HCT116 (cell line): ENCODE measurements at regions of chr19 and their contacts with region 1.

Region 1: GRCh38 chr19:48492925-48493717 is 18.5 kb downstream of the LMTK3 start:
- DNase-seq: peak; percentile 98
- ATAC-seq: peak; percentile 78
- H3K4me3 ChIP-seq: peak overlapping the region; percentile 76 to 78
- H3K27ac ChIP-seq: peak overlapping the region; percentile 93
- H3K4me1 ChIP-seq: peaks cover 46 to 72% of the 10 kb centered on the region in 2 experiments
- H3K27me3 ChIP-seq: no peaks in the 10 kb centered on the region
- CTCF ChIP-seq: no peak
- POLR2A ChIP-seq: peak; percentile 47
- RAD21 ChIP-seq: no peak

Region 2: DNA sequence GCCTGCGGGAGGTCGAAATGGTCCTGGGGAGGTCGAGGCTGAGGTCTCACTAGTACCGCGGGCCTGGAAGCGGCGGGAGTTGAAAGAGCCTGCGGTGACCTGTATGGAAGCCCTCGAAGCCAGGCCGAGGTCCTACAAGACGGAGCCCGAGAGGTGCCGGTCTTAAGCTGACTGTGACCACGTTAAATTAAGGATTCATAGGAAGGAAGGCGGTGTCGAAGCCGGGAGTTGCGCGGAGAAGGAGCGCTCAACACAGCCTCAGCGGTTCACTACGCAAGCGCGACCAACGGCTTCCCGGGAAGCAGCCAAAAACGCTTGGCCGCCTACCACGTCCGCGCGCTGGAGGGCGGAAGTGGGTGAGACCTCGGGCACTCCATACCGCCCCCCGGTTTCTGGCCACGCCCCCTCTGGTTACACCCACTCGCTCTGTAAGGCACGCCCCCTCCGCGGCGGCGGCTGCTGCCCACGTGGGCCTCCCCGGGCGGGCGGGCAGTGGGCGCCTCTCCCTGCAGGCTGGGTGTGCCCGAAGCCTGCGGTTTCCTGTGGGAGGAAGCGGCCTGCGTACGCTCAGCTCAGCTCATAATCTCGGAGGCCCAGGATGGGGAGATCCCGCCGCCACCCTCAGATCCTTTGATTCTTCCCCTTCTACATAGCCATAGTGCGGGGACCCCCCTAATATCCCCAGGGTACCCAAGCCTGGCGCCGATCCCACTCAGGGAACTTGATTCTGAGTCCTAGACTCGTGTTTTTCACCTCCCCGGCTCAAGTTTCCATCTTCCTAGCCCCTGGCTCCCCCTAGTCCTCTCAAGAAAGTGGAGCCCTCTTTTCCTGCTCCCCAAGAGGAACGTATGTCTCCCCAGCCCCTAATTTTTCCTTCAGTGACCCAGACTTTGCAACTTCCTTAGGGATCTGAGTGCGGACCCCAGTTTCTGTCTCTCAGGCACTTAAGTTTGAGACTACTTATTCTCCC is 171.2 kb before region 1 on chr19:
- CTCF ChIA-PET with region 1: interaction called, 6 read pairs
- POLR2A ChIA-PET with region 1: no interaction called
- RAD21 ChIA-PET with region 1: no interaction called
- intact Hi-C with region 1: loop called (anchors 1 kb)
- DNase-seq: peak; percentile 94
- ATAC-seq: peak; percentile 69
- H3K4me3 ChIP-seq: peak overlapping the region; percentile 55 to 67
- H3K27ac ChIP-seq: peak overlapping the region; percentile 96
- H3K4me1 ChIP-seq: peaks cover 40 to 76% of the 10 kb centered on the region in 2 experiments
- H3K27me3 ChIP-seq: no peaks in the 10 kb centered on the region
- CTCF ChIP-seq: peak in 1 of 3 experiments; percentile 8; a peak in 1 of 6 replicates
- POLR2A ChIP-seq: peak; percentile 59
- RAD21 ChIP-seq: no peak

Region 3: DNA sequence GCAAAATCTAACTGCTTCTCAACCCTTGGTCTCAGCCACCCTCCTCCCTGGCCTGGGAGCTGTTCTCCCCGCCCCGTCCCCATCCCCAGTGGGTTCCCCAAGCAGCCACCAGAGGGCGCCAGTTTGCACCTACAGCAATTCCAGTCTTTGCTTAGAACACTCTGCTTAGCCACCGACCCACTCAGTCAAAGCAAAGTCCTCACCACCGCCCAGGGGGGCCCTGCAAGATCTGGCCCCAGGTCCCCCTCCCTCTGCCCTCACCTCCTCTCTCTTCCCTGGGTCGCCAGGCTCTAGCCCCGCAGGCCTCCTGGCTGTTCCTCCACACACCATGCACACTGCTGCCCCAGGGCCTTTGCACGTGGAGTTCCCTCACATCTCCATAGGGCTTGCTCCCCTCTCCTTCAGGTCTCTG is 141.8 kb before region 1 on chr19:
- CTCF ChIA-PET with region 1: no interaction called
- POLR2A ChIA-PET with region 1: no interaction called
- RAD21 ChIA-PET with region 1: no interaction called
- intact Hi-C with region 1: loop called (anchors 5 kb)
- DNase-seq: no peak
- ATAC-seq: peak; percentile 67
- H3K4me3 ChIP-seq: no peak overlapping the region
- H3K27ac ChIP-seq: no peak overlapping the region
- H3K4me1 ChIP-seq: peaks cover 22 to 46% of the 10 kb centered on the region in 2 experiments
- H3K27me3 ChIP-seq: no peaks in the 10 kb centered on the region
- CTCF ChIP-seq: peak; percentile 75 to 96 (median 95); a peak in 5 of 6 replicates
- POLR2A ChIP-seq: no peak
- RAD21 ChIP-seq: peak; percentile 80

Region 4: GRCh38 chr19:48391107-48391986 is 101.8 kb before region 1 on chr19 and contains the start of gene KDELR1:
- CTCF ChIA-PET with region 1: interaction called, 4 read pairs
- POLR2A ChIA-PET with region 1: no interaction called
- RAD21 ChIA-PET with region 1: no interaction called
- intact Hi-C with region 1: loop called (anchors 10 kb)
- DNase-seq: no peak
- ATAC-seq: peak; percentile 80
- H3K4me3 ChIP-seq: peak within 1 kb of the TSS; percentile 82 to 96
- H3K27ac ChIP-seq: peak within 1 kb of the TSS; percentile 80
- H3K4me1 ChIP-seq: peaks cover 9 to 52% of the 10 kb centered on the region in 2 experiments
- H3K27me3 ChIP-seq: no peaks in the 10 kb centered on the region
- CTCF ChIP-seq: peak in 2 of 3 experiments; percentile 81 to 95; a peak in 5 of 6 replicates
- POLR2A ChIP-seq: no peak
- RAD21 ChIP-seq: no peak
- total RNA-seq, gene KDELR1: 212 TPM

Region 5: GRCh38 chr19:48468775-48469288 is 24.3 kb before region 1 on chr19:
- CTCF ChIA-PET with region 1: interaction called, 6 read pairs
- POLR2A ChIA-PET with region 1: interaction called, 6 read pairs
- RAD21 ChIA-PET with region 1: no interaction called
- intact Hi-C with region 1: loop called (anchors 2 kb)
- DNase-seq: peak; percentile 99
- ATAC-seq: peak; percentile 91
- H3K4me3 ChIP-seq: peak overlapping the region; percentile 88 to 90
- H3K27ac ChIP-seq: peak overlapping the region; percentile 94
- H3K4me1 ChIP-seq: peaks cover 11 to 25% of the 10 kb centered on the region in 2 experiments
- H3K27me3 ChIP-seq: no peaks in the 10 kb centered on the region
- CTCF ChIP-seq: no peak
- POLR2A ChIP-seq: no peak
- RAD21 ChIP-seq: no peak

Region 6: GRCh38 chr19:48510421-48511280 is 17.5 kb after region 1 on chr19:
- CTCF ChIA-PET with region 1: interaction called, 14 read pairs
- POLR2A ChIA-PET with region 1: interaction called, 5 read pairs
- RAD21 ChIA-PET with region 1: interaction called, 4 to 6 read pairs
- intact Hi-C with region 1: no loop called
- DNase-seq: no peak
- ATAC-seq: peak; percentile 40
- H3K4me3 ChIP-seq: no peak overlapping the region
- H3K27ac ChIP-seq: no peak overlapping the region
- H3K4me1 ChIP-seq: peaks cover 0 to 19% of the 10 kb centered on the region in 2 experiments; a peak in 2 of 4 replicates
- H3K27me3 ChIP-seq: no peaks in the 10 kb centered on the region
- CTCF ChIP-seq: no peak
- POLR2A ChIP-seq: no peak
- RAD21 ChIP-seq: no peak

Region 7: DNA sequence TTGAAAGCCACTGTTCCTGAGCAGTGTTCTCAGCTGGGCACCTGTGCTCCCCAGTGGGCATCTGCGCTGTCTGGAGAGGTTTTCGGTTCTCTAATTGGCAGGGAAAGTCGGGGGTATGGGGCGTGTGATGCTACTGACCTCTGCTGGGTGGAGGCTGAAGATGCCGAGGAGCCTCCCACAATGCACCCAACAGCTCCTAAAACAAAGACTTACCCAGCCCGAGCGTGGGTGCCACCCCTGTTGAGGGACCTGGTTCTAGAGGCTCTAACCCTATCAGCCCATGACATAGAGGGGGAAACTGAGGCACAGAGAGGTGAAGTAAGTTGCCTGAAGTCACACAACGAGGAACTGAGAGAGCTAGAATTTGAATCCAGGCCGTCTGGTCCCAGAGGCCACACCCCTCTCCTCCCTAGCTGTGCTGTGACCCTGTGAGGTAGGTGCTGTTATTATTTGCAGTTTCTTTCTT is 115.7 kb after region 1 on chr19:
- CTCF ChIA-PET with region 1: interaction called, 20 read pairs
- POLR2A ChIA-PET with region 1: interaction called, 3 read pairs
- RAD21 ChIA-PET with region 1: no interaction called
- intact Hi-C with region 1: no loop called
- DNase-seq: peak; percentile 66
- ATAC-seq: peak; percentile 92
- H3K4me3 ChIP-seq: peak overlapping the region; percentile 22 to 50
- H3K27ac ChIP-seq: peak overlapping the region; percentile 10; the same call in 1 of the 2 replicates
- H3K4me1 ChIP-seq: peaks cover 5 to 13% of the 10 kb centered on the region in 2 experiments; a peak in 3 of 4 replicates
- H3K27me3 ChIP-seq: no peaks in the 10 kb centered on the region
- CTCF ChIP-seq: peak; percentile 77 to 80 (median 77)
- POLR2A ChIP-seq: no peak
- RAD21 ChIP-seq: peak; percentile 92